ENCODE measurements at regions of chrX and their contacts with region 1.

Region 1: DNA sequence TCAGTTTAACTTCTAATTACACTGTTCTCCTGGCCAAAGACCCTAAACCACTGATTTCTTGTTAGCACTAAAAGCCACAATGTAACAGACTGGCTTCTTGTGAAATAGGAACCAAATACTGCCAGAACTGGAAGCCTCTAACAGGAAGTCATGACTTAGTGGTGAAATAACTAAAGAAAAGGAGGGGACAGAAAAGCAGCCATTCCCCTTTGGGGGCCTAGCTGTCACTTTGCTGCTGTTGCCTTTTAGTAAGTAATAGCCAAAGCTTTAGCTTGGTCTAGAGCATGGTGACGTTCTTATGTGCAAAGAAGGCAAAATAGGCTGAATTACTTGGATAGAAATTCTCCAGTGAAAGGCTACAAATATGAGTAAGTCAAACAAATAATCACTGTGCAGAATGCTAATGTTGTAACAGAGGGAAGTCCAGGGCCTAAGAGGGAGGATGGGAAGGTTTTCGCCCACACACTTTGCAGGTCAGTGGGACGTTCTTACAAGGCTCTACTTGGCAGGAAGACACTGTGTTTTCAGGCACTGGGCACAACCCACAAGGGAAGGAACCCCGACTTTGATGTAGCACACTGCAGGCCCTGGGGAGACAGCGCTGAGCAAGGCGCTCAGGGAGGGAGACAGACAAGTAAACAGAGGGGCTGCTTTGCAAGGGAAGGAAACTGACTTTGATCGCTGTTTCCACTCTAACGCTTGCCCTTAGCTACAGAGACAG is 16.7 kb downstream of the GAB3 start:
- DNase-seq: peak; percentile 51
- H3K4me3 Mint-ChIP-seq: peak overlapping the region; percentile 57
- H3K27ac Mint-ChIP-seq: peak overlapping the region; percentile 97
- H3K4me1 Mint-ChIP-seq: peaks cover 95% of the 10 kb centered on the region
- H3K27me3 Mint-ChIP-seq: no peaks in the 10 kb centered on the region

Region 2: GRCh38 chrX:154505734-154506133 is 228.5 kb before region 1 on chrX:
- CTCF ChIA-PET with region 1: no interaction called
- DNase-seq: no peak
- H3K4me3 Mint-ChIP-seq: no peak overlapping the region
- H3K27ac Mint-ChIP-seq: no peak overlapping the region
- H3K4me1 Mint-ChIP-seq: peaks cover 13% of the 10 kb centered on the region
- H3K27me3 Mint-ChIP-seq: no peaks in the 10 kb centered on the region

Region 3: DNA sequence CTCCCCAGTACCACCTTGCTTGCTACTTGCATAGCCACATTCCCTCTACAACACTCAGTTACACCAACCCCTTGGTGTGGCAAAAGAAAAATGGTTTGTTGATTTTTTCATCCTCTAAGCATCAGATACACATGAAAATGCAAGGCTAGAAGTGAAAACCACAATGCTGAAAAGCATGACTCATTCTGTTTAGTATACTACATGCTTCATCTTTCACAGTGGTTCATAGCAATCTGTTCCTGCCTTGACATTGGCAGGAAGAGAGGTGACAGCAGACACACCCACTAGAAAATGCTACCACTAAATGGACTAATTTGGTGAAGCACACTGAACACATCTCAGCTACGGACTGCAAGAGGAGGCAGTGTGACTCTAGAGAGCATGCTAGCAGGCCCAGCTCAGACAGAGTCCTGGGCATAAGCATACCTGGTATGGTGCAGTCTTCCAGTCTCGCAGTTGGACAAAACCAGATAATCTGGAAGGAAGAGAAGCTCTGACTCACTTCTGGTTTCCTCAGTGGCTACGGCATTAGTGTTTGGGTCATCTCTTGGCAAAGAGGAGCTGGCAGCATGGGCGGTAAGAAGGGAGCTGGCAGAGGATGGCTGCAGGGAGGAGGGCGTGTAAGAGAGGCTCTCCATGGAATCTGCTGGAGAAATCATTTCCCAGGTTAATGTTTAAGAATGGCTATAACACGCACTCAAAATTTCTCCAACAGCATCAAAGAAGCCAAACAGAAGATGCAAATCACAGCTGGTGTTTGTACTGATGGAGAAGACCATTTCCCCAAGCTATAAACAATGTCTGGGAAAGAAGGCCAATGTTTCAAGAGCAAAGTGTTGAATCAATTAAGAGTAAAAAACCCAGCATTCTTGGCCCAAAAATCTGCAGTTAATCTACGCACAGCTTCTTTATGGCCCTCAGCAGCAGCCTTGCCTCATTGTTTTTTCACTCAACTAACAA is 21.2 kb before region 1 on chrX:
- CTCF ChIA-PET with region 1: interaction called, 12 read pairs
- DNase-seq: peak; percentile 43
- H3K4me3 Mint-ChIP-seq: peak overlapping the region; percentile 8
- H3K27ac Mint-ChIP-seq: peak overlapping the region; percentile 87
- H3K4me1 Mint-ChIP-seq: peaks cover 48% of the 10 kb centered on the region
- H3K27me3 Mint-ChIP-seq: no peaks in the 10 kb centered on the region

Measured in activated naive CD4-positive, alpha-beta T cell treated with anti-CD3 and anti-CD28 coated beads, Interleukin-2, amount 10 ng/mL, durations not matched to agents 7 days and 5 days (primary cell).